Heart left ventricle (tissue), 16 donors: ENCODE measurements at regions of chrX and their contacts with region 1.

Region 1: GRCh38 chrX:41110801-41111625 is 25.8 kb downstream of the USP9X start:
- DNase-seq: no peak
- ATAC-seq: peak in 1 of 4 donors; percentile 25
- H3K4me3 ChIP-seq: no peak overlapping the region
- H3K27ac ChIP-seq: no peak overlapping the region
- H3K4me1 ChIP-seq: peaks cover 0 to 66% (median 39%) of the 10 kb centered on the region in 12 donors
- H3K27me3 ChIP-seq: no peaks in the 10 kb centered on the region
- CTCF ChIP-seq: no peak
- POLR2A ChIP-seq: no peak

Region 2: DNA sequence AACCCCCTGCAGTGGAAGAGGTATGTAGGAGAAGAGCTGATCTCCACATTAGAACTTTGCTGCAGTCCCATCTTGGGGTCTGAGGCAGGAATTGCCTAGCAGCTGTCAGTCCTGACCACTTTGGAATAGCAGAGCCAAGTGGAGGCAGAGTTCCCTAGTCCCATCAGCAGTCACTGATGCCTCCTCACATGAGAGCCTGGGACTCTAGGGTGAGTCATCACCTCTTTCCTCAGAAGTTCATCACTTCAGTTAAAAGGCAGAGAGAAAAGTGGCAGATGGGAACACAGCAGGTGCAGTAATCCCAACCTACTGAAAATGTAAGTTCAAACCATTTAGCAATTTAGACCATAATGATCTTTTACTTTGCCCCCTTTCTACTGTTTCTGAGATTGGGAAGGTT is 301.8 kb before region 1 on chrX:
- intact Hi-C with region 1: loop called in 3 of 10 experiments (anchors 10 kb)
- DNase-seq: no peak
- ATAC-seq: no peak
- H3K4me3 ChIP-seq: no peak overlapping the region
- H3K27ac ChIP-seq: no peak overlapping the region
- H3K4me1 ChIP-seq: no peaks in the 10 kb centered on the region
- H3K27me3 ChIP-seq: peaks cover 0 to 22% (median 0%) of the 10 kb centered on the region in 9 donors
- CTCF ChIP-seq: no peak
- POLR2A ChIP-seq: no peak

Region 3: DNA sequence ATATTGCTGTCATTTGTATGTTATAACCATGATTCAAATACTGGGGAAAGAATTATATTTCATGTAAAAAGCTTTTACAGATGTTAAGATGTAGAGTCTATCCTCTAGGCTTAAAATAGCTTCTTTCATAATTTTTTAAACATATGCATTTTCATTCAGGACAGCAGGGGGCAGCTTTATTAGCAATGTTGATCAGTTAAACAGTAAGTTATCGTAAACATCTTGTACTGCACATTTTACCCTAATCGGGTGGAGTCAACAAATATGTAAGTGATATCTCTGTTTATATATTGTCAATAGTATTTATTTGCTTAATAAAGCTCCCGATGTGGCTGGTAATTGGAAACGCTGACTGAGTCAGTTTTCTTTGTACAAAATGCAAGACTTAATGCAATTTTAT is 233.1 kb before region 1 on chrX:
- intact Hi-C with region 1: loop called (anchors 2 to 10 kb)
- DNase-seq: no peak
- ATAC-seq: no peak
- H3K4me3 ChIP-seq: no peak overlapping the region
- H3K27ac ChIP-seq: no peak overlapping the region
- H3K4me1 ChIP-seq: peaks cover 0 to 5% (median 0%) of the 10 kb centered on the region in 12 donors
- H3K27me3 ChIP-seq: peaks cover 0 to 29% (median 0%) of the 10 kb centered on the region in 9 donors
- CTCF ChIP-seq: peak; percentile 20 to 58 (median 41)
- POLR2A ChIP-seq: no peak

Region 4: GRCh38 chrX:41906515-41907165 is 795.6 kb after region 1 on chrX:
- intact Hi-C with region 1: no loop called
- DNase-seq: no peak
- ATAC-seq: no peak
- H3K4me3 ChIP-seq: no peak overlapping the region
- H3K27ac ChIP-seq: no peak overlapping the region
- H3K4me1 ChIP-seq: peaks cover 0 to 5% (median 0%) of the 10 kb centered on the region in 12 donors
- H3K27me3 ChIP-seq: no peaks in the 10 kb centered on the region
- CTCF ChIP-seq: no peak
- POLR2A ChIP-seq: no peak